CD8-positive, alpha-beta T cell (primary cell): ENCODE measurements at regions of chr5 and their contacts with region 1.

Region 1: DNA sequence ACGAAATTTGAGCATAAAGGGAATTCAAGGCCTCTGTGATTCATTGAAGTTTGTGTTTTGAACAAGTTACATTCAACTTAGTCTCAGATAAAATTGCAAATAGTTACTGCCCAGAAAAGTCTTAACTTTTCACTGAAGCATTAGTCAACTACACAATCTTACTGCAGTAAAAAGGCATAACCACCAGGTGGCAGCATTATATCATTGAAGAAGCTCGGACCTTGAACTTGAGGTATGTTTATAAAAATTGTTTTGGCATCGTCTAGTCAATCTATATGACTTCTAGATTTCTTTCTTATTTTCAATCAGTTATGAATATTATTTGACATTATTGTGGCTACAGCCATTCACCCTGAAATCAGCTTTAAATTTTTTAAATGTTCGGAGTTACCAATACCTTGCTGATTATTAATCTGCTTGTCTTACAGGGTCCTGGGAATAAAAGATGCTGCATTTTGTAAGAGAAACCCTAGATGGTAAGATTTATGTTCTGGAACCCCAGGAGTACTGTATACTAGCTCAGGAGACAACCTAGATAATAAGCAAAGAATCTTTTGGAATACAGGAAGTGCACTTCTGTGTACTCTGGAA is 83.9 kb upstream of the GRAMD2B start:
- DNase-seq: peak in 8 of 9 experiments; percentile 24 to 73 (median 46)
- ATAC-seq: peak; percentile 68
- H3K4me3 ChIP-seq: no peak overlapping the region
- H3K4me3 Mint-ChIP-seq: no peak overlapping the region
- H3K27ac ChIP-seq: no peak overlapping the region
- H3K27ac Mint-ChIP-seq: no peak overlapping the region
- H3K4me1 ChIP-seq: no peaks in the 10 kb centered on the region
- H3K4me1 Mint-ChIP-seq: no peaks in the 10 kb centered on the region
- H3K27me3 ChIP-seq: no peaks in the 10 kb centered on the region
- H3K27me3 Mint-ChIP-seq: peaks cover 10% of the 10 kb centered on the region
- CTCF ChIP-seq: peak; percentile 92

Region 2: DNA sequence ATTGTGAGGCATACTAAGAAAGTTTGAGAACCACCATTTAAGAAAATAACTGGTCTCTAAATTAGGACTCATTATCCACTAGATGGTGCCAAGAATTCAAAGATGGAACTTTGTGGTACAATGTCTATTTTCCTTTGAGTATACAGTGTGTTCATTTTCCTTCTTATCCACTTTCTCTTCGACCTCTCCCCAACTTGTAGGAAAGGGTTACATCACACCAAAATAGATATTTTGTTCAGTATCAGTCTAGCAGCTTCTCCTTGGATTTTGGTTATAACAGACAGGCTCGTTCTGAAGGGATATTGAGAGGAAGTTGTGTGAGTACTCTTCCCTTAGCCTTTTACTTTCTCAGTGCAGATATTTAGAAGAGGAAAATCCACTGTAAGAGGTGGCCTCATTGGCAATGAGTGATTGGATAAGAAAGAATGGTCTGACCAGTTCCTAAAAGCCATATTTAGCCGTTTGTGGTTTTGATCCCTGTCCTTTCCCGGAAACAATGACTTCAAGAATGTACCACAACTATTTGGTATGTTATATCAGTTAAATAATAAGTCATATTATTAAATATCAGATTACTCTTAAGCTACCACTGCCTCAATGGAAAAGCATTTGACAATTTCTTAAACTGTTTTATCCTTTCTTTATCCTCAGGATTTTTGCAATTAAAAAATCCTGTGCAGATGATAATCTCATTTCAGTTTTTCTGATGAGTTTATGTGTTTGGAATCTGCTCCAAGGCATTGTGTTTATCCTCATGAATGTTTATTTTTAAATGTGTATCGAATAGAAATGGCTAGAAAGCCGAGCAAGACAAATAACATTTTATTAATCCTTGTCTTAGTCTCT is 14.9 kb after region 1 on chr5:
- CTCF ChIA-PET with region 1: interaction called, 14 read pairs
- POLR2A ChIA-PET with region 1: no interaction called
- intact Hi-C with region 1: loop called in 1 of 2 experiments (anchors 1 kb)
- DNase-seq: peak in 2 of 9 experiments; percentile 57 to 70
- ATAC-seq: peak; percentile 56
- H3K4me3 ChIP-seq: peak overlapping the region in 1 of 2 experiments; percentile 14
- H3K4me3 Mint-ChIP-seq: peak overlapping the region; percentile 66
- H3K27ac ChIP-seq: no peak overlapping the region
- H3K27ac Mint-ChIP-seq: peak overlapping the region; percentile 3
- H3K4me1 ChIP-seq: peaks cover 13% of the 10 kb centered on the region
- H3K4me1 Mint-ChIP-seq: peaks cover 14% of the 10 kb centered on the region
- H3K27me3 ChIP-seq: no peaks in the 10 kb centered on the region
- H3K27me3 Mint-ChIP-seq: peaks cover 3% of the 10 kb centered on the region
- CTCF ChIP-seq: peak; percentile 75

Region 3: DNA sequence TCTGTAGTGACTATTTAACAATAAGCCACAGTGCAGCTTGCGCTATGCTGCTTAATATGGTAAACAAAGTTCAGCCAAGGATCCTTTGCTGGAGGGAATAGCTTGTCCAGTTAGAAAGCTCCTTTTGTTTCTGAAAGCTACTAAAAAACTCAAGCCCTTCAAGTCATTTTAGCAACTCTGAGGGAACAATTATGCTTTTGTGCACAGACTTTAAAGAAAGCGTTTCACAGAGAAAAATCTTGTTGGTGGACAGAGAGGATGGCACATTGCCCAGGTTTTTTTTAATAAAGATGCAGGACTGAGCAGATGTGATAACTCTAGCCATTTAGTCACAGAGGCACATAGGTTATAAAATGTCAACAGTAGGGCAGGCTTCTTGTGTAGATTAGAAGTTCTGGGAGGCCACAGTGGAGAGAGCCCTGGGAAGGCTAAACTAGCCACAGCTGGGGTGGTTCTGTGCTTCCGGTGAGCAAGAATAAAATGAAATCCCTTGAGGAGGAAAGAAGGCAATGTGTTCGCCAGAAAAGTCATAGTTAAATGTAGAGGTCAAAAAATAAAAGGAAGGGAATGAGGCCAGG is 192.3 kb after region 1 on chr5:
- CTCF ChIA-PET with region 1: interaction called, 125 read pairs
- POLR2A ChIA-PET with region 1: no interaction called
- intact Hi-C with region 1: no loop called
- DNase-seq: no peak
- ATAC-seq: no peak
- H3K4me3 ChIP-seq: no peak overlapping the region
- H3K4me3 Mint-ChIP-seq: no peak overlapping the region
- H3K27ac ChIP-seq: no peak overlapping the region
- H3K27ac Mint-ChIP-seq: no peak overlapping the region
- H3K4me1 ChIP-seq: no peaks in the 10 kb centered on the region
- H3K4me1 Mint-ChIP-seq: no peaks in the 10 kb centered on the region
- H3K27me3 ChIP-seq: no peaks in the 10 kb centered on the region
- H3K27me3 Mint-ChIP-seq: no peaks in the 10 kb centered on the region
- CTCF ChIP-seq: no peak

Region 4: DNA sequence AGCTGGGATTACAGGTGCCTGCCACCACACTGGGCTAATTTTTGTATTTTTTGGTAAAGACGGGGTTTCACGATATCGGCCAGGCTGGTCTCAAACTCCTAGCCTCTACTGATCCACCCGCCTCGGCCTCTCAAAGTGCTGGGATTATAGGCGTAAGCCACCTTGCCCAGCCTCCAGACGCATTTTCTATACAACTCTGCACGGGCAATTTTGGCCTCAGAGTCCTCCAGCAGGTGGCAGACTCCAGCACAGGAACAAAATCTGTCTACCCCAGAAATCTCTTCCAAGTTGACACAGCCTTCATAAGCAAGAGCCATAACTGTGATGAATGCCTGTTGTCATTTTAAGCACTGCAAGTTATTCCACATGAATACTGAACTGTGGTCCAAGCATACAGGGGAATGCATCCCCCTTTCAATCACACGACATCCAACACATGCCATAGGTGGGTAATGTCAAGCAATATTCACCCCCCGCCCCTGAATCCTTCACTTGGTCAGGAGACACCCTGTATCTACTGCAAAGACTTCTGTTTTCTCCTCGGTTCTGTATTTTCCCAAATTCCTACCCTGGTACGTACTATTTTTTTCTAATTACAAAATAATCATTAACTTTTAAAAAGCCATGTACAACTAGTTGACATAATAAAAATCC is 204.9 kb after region 1 on chr5:
- CTCF ChIA-PET with region 1: interaction called, 125 read pairs
- POLR2A ChIA-PET with region 1: interaction called, 3 read pairs
- intact Hi-C with region 1: loop called (anchors 1 kb)
- DNase-seq: peak in 5 of 9 experiments; percentile 17 to 40 (median 36)
- ATAC-seq: no peak
- H3K4me3 ChIP-seq: no peak overlapping the region
- H3K4me3 Mint-ChIP-seq: no peak overlapping the region
- H3K27ac ChIP-seq: no peak overlapping the region
- H3K27ac Mint-ChIP-seq: no peak overlapping the region
- H3K4me1 ChIP-seq: no peaks in the 10 kb centered on the region
- H3K4me1 Mint-ChIP-seq: no peaks in the 10 kb centered on the region
- H3K27me3 ChIP-seq: no peaks in the 10 kb centered on the region
- H3K27me3 Mint-ChIP-seq: no peaks in the 10 kb centered on the region
- CTCF ChIP-seq: peak; percentile 34

Region 5: DNA sequence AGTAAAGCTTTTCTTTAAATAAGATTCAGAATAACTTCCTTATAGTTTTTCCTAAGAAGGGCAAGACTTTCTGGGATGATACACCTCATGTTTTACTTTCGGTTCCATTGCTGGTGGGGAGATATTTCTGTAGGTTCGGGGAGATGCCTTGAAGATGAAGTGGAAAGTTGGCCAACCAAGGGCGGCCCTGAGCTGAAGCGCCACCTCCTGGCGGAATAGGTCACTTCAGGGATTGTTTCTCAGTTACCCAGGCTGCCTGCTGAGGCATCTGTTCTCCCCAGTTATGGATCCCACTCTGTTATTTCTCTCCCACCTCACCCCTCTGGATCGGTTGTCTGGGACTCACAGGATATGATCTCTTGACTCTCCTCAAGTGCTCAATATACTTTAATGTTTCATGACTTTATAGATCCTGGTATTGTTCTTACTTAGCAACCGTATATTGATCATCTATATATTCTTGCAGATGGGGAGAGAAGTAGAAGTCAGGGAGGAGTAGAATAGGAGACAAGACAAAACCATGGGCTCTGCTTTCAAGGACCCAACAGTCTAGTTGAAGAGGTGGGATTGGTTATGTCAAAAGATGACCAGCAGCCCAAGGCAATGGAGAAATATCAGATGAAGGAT is 974.6 kb after region 1 on chr5:
- CTCF ChIA-PET with region 1: no interaction called
- POLR2A ChIA-PET with region 1: no interaction called
- intact Hi-C with region 1: loop called in 1 of 2 experiments (anchors 2 kb)
- DNase-seq: peak; percentile 41 to 79 (median 62)
- ATAC-seq: peak; percentile 65
- H3K4me3 ChIP-seq: no peak overlapping the region
- H3K4me3 Mint-ChIP-seq: no peak overlapping the region
- H3K27ac ChIP-seq: no peak overlapping the region
- H3K27ac Mint-ChIP-seq: no peak overlapping the region
- H3K4me1 ChIP-seq: no peaks in the 10 kb centered on the region
- H3K4me1 Mint-ChIP-seq: no peaks in the 10 kb centered on the region
- H3K27me3 ChIP-seq: no peaks in the 10 kb centered on the region
- H3K27me3 Mint-ChIP-seq: no peaks in the 10 kb centered on the region
- CTCF ChIP-seq: peak; percentile 79